ENCODE measurements at regions of chr15 and their contacts with region 1.

Region 1: DNA sequence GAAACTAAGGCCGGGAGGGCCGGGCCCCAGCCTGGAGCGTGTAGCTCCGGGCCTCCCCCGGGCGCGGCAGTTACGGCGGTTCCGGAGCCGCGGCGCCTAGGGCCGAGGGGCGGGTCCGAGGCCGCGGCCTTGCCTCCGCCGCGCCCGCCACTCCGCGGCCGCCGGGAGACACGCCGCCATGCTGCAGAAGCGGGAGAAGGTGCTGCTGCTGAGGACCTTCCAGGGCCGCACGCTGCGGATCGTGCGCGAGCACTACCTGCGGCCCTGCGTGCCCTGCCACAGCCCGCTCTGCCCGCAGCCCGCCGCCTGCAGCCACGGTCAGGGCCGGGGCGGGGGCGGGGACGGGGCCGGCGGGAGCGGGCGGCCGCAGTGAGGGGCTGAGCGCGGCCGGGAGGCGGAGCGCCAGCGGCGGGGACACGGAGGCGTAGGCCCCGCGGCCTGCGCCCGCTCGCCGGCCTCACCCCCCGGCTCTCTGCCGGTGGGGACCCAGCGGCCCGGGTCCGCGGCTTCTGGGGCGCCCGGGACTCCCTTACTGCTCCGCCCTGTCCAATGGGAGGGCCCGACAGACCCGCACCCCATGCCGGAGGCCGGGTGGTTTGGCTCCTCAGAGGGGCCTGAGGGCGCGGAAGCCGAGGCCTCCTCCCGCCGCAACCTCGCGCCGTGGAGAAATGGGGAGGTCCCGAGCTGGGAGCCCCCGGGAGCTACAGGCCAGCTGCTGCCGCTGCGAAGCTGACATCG is at the start of gene DIS3L:
- ATAC-seq: peak; percentile 82 to 87 (median 86)
- H3K4me3 ChIP-seq: peak within 1 kb of the TSS; percentile 39 to 58 (median 48)
- H3K27ac ChIP-seq: peak within 1 kb of the TSS; percentile 88 to 93
- H3K4me1 ChIP-seq: peaks cover 30 to 32% of the 10 kb centered on the region in 2 donors
- total RNA-seq, gene DIS3L: 12.1 to 27.6 (median 18.5) TPM

Region 2: DNA sequence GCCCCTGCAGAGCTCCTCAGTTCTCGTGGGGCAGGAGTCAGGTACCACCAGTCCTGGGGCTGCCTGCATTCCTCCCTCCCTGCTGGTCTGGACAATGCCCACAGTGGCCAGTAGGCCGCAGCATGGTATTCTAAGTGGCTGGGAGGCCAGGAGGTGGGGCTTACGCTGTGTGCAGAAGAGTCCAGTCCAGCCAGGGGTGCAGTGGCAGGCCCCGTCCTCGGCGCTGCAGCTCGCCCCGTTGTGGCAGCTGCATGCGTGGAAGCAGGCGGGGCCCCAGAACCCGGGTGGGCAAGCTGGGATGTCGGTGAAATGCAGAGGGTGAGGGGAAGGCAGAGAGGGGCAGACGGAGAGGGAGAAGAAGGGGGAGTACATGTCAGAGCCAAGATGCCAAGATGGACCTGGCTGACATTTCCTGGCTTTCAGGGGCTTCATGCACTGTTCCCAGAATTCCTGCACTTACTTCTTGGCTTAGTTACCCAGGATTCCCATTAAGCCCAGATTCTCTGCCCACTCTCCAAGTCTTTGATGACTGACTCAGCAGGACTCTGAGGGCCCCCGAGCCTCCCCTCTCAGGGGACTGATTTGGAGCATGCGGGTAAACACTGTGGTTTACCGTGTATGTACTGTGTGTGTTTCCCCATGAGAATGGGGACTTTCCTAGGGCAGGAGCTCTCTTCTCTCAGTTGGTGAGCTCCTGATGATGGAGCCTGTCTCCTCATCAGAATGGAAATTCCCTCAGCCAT is 376.8 kb before region 1 on chr15:
- in situ Hi-C with region 1: loop called in 2 of 9 experiments (anchors 25 kb)
- ATAC-seq: peak; percentile 96 to 100 (median 98)
- H3K4me3 ChIP-seq: no peak overlapping the region
- H3K27ac ChIP-seq: no peak overlapping the region
- H3K4me1 ChIP-seq: peaks cover 13 to 25% of the 10 kb centered on the region in 2 donors

Region 3: DNA sequence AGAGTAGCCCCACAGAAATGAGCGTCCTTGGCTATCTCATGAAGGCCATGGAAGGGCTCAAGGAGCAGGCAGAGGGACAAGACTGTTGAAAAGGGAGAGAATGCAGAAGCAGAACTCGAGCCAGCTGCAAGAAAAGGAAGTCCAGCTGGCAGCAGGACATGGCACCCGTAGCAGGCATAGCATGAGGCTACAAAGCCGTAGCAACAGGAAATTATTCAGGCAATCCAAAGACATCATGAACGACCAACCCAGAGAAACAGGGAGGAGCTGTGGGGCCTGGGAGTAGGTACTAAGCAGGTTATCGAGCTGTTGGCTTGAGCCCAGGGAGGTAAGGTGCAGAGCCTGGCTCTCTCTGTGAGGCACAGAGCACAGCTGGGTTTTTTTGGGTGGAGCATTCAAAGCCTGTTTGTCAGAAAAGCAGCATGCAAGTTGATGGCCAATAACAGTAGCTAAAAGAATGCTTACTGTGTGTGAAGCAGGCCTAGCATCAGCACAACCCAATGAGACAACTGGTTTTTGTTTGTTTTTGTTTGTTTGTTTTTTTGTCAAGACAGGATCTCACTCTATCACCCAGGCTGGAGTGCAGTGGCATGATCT is 627.8 kb after region 1 on chr15:
- in situ Hi-C with region 1: no loop called
- ATAC-seq: peak in 3 of 8 experiments; percentile 54 to 78 (median 75)
- H3K4me3 ChIP-seq: no peak overlapping the region
- H3K27ac ChIP-seq: no peak overlapping the region
- H3K4me1 ChIP-seq: no peaks in the 10 kb centered on the region